GM10248 (cell line): ENCODE measurements at regions of chr4 and their contacts with region 1.

Region 1: GRCh38 chr4:150867148-150867547 is 147.9 kb downstream of the LRBA start:
- DNase-seq: peak; percentile 68
- CTCF ChIP-seq: peak; percentile 52

Region 2: DNA sequence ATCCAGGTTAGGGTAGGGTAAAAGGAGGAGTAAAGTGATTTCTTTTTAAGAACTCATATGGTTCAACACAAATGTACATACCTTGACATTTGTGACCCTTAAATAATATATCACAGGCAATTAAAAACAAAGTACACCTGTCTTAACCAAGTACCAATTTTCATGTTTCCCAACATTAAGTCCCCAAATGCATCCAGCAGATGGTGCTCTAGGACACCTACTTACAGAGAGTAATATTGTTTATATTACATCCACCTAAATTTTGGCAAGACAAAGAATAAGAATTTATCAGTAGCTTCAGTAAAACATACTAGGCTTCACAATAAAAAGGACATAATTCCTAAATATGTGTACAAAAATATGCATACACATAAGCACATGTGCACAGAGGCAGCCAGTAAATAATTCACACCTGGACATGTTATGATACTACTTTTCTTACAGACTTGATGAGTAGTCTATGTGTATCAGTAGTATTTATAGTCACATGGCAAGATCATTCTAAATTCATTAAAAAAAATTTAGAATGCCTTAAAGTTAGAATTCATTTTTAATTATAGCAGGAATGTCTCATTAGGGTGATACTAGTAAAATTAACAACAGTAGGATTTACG is 569.2 kb before region 1 on chr4:
- CTCF ChIA-PET with region 1: interaction called, 28 read pairs
- POLR2A ChIA-PET with region 1: no interaction called
- DNase-seq: peak; percentile 32
- CTCF ChIP-seq: peak; percentile 41

Region 3: DNA sequence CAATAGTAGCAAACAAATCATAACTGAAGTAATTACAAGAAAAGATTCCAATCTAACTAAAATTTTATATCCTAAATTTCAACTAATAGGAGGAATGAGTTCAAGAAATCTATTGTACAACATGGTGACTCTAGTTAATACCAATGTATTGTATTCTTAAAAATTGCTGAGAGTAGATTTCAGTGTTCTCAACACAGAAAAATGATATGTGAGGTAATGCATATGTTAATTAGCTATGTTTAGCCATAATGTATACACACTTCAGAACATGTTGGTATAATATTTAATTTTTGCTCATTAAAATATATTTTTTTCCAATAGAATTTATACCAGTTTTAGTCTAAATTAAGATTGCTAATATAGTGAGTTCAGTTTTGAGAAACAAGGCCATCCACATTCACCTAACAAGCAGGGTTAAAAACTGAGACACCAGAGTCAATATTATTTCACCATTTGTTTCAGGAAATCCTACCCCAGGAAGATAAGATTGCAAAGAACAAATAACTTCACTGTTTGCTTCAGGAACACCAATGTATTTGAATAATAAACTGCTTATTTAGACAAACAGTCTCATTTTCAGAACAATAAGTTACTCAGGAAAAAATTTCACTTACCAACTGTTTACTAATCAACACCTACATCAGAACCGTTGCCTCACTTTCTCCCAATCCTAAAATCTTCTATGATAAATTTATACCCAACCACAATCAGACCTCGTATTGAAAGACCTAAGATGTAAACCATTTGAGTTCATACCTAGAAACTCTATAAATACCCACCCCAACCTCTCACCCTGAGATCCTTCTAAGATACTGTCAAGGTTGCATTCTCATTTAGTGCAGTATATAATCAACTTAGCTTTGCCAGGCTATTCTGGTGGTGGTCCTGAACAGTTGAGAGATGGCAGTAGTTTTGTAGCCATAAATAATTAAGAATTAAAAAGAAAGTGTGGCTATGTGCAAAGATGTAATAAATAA is 152.4 kb before region 1 on chr4:
- CTCF ChIA-PET with region 1: no interaction called
- POLR2A ChIA-PET with region 1: no interaction called
- DNase-seq: no peak
- CTCF ChIP-seq: no peak

Region 4: GRCh38 chr4:150746156-150746555 is 121.0 kb before region 1 on chr4:
- CTCF ChIA-PET with region 1: no interaction called
- POLR2A ChIA-PET with region 1: no interaction called
- DNase-seq: no peak
- CTCF ChIP-seq: no peak

Region 5: GRCh38 chr4:150855981-150856510 is 11.1 kb before region 1 on chr4:
- CTCF ChIA-PET with region 1: interaction called, 49 read pairs
- POLR2A ChIA-PET with region 1: no interaction called
- DNase-seq: no peak
- CTCF ChIP-seq: no peak

Region 6: GRCh38 chr4:150886599-150886998 is 19.5 kb after region 1 on chr4:
- CTCF ChIA-PET with region 1: interaction called, 21 read pairs
- POLR2A ChIA-PET with region 1: no interaction called
- DNase-seq: no peak
- CTCF ChIP-seq: no peak

Region 7: GRCh38 chr4:151052785-151053184 is 185.6 kb after region 1 on chr4:
- CTCF ChIA-PET with region 1: no interaction called
- POLR2A ChIA-PET with region 1: no interaction called
- DNase-seq: no peak
- CTCF ChIP-seq: no peak